ENCODE measurements at regions of chr9 and their contacts with region 1.

Region 1: DNA sequence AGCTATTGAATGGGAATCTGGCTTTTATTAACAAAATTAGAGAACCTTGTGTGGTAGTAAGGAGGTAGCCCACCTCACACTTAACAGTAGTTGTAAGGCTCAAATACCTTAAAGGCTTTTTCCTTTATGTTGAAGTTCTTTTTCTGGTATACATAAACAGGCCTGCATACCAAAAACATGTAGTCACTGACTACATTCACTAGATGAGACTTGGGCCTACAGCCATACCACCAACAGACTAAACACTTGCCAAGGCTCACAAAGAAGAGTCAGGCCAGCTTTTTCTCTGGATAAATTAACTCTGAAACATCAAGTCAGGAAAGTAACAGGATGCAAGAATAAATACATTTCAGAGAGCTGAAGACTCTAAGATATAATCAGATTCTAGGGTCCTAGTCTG is 78.6 kb upstream of the MPDZ start:
- DNase-seq: no peak
- ATAC-seq: no peak
- H3K4me3 ChIP-seq: no peak overlapping the region
- H3K27ac ChIP-seq: no peak overlapping the region
- H3K4me1 ChIP-seq: peaks cover 0 to 3% of the 10 kb centered on the region in 2 donors
- H3K27me3 ChIP-seq: no peaks in the 10 kb centered on the region
- CTCF ChIP-seq: no peak
- POLR2A ChIP-seq: no peak

Region 2: GRCh38 chr9:14358523-14358922 is 1000.4 kb after region 1 on chr9:
- in situ Hi-C with region 1: loop called in 3 of 4 experiments (anchors 5 to 10 kb)
- intact Hi-C with region 1: no loop called
- DNase-seq: no peak
- ATAC-seq: no peak
- H3K4me3 ChIP-seq: no peak overlapping the region
- H3K27ac ChIP-seq: no peak overlapping the region
- H3K4me1 ChIP-seq: peaks cover 0 to 3% of the 10 kb centered on the region in 2 donors
- H3K27me3 ChIP-seq: no peaks in the 10 kb centered on the region
- CTCF ChIP-seq: no peak
- POLR2A ChIP-seq: no peak

Measured in gastrocnemius medialis (tissue), 4 donors.